Activated CD4-positive, alpha-beta memory T cell treated with anti-CD3 and anti-CD28 coated beads for 36 hours (primary cell): ENCODE measurements at regions of chr2 and their contacts with region 1.

Region 1: DNA sequence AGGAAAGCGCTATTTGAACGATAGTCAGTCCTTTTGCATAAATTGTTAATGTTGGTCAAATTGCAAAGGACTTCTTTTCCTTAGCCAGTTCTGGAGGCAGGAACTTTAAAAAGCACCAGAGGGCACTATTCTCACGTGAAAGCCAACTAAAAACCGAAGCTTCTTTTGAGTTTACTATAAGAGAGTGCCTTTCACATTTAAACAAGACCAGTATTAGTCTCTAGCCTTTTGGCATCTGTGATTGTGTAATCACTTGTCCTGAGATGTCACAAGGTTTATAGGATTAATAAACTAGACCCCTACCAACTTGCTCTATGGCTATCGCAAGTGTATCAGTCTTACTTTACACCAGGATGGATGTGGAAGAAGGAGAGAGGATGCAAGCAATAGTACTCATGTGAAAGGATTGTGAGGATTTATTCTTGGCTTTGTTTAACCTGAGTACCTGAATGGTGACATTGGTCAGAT is 14.4 kb upstream of the STAT4 start:
- DNase-seq: no peak
- H3K4me3 Mint-ChIP-seq: no peak overlapping the region
- H3K27ac Mint-ChIP-seq: no peak overlapping the region
- H3K4me1 Mint-ChIP-seq: peaks cover 13% of the 10 kb centered on the region
- H3K27me3 Mint-ChIP-seq: no peaks in the 10 kb centered on the region

Region 2: GRCh38 chr2:190858817-190859216 is 306.4 kb before region 1 on chr2:
- CTCF ChIA-PET with region 1: no interaction called
- POLR2A ChIA-PET with region 1: no interaction called
- intact Hi-C with region 1: no loop called
- DNase-seq: no peak
- H3K4me3 Mint-ChIP-seq: no peak overlapping the region
- H3K27ac Mint-ChIP-seq: no peak overlapping the region
- H3K4me1 Mint-ChIP-seq: peaks cover 27% of the 10 kb centered on the region
- H3K27me3 Mint-ChIP-seq: no peaks in the 10 kb centered on the region

Region 3: GRCh38 chr2:191218292-191218898 is 53.2 kb after region 1 on chr2:
- CTCF ChIA-PET with region 1: interaction called, 20 read pairs
- POLR2A ChIA-PET with region 1: no interaction called
- intact Hi-C with region 1: loop called (anchors 2 kb)
- DNase-seq: peak; percentile 47
- H3K4me3 Mint-ChIP-seq: no peak overlapping the region
- H3K27ac Mint-ChIP-seq: no peak overlapping the region
- H3K4me1 Mint-ChIP-seq: peaks cover 22% of the 10 kb centered on the region
- H3K27me3 Mint-ChIP-seq: no peaks in the 10 kb centered on the region

Region 4: GRCh38 chr2:191302459-191303139 is 137.4 kb after region 1 on chr2:
- CTCF ChIA-PET with region 1: interaction called, 14 read pairs
- POLR2A ChIA-PET with region 1: no interaction called
- intact Hi-C with region 1: loop called (anchors 1 kb)
- DNase-seq: peak; percentile 15
- H3K4me3 Mint-ChIP-seq: no peak overlapping the region
- H3K27ac Mint-ChIP-seq: no peak overlapping the region
- H3K4me1 Mint-ChIP-seq: no peaks in the 10 kb centered on the region
- H3K27me3 Mint-ChIP-seq: no peaks in the 10 kb centered on the region

Region 5: GRCh38 chr2:191501561-191502168 is 336.5 kb after region 1 on chr2:
- CTCF ChIA-PET with region 1: interaction called, 19 read pairs
- POLR2A ChIA-PET with region 1: no interaction called
- intact Hi-C with region 1: loop called (anchors 1 kb)
- DNase-seq: no peak
- H3K4me3 Mint-ChIP-seq: no peak overlapping the region
- H3K27ac Mint-ChIP-seq: no peak overlapping the region
- H3K4me1 Mint-ChIP-seq: no peaks in the 10 kb centered on the region
- H3K27me3 Mint-ChIP-seq: peaks cover 5% of the 10 kb centered on the region